ENCODE measurements at regions of chr3 and their contacts with region 1.

Region 1: GRCh38 chr3:134449277-134449676 is 36.5 kb downstream of the ANAPC13 start:
- DNase-seq: peak in 1 of 2 experiments; percentile 27
- H3K4me3 ChIP-seq: no peak overlapping the region
- H3K27ac ChIP-seq: no peak overlapping the region
- H3K4me1 ChIP-seq: peaks cover 18% of the 10 kb centered on the region
- H3K27me3 ChIP-seq: no peaks in the 10 kb centered on the region
- CTCF ChIP-seq: peak; percentile 49

Region 2: DNA sequence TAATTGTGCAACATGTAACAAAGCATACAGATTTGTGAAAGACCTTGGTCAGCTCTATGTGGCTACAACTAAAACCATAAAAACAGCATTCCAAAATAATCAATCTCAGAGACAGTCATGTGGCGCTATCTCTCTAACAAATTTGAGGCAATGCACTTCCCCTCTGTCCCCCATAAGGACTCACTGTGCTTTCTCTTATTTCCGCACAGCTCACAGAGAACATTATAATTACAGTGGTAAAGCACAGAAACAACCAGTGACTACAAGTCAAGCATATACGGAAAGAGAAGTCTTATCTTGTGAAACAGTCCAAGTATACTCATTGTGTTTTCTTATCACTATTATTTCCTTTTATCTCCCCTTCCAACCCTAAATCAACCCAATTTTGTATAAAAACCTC is 262.9 kb before region 1 on chr3:
- CTCF ChIA-PET with region 1: interaction called, 13 read pairs
- POLR2A ChIA-PET with region 1: no interaction called
- intact Hi-C with region 1: no loop called
- DNase-seq: no peak
- H3K4me3 ChIP-seq: no peak overlapping the region
- H3K27ac ChIP-seq: no peak overlapping the region
- H3K4me1 ChIP-seq: no peaks in the 10 kb centered on the region
- H3K27me3 ChIP-seq: no peaks in the 10 kb centered on the region
- CTCF ChIP-seq: no peak

Region 3: GRCh38 chr3:134590766-134591165 is 141.5 kb after region 1 on chr3:
- CTCF ChIA-PET with region 1: no interaction called
- POLR2A ChIA-PET with region 1: no interaction called
- intact Hi-C with region 1: no loop called
- DNase-seq: no peak
- H3K4me3 ChIP-seq: no peak overlapping the region
- H3K27ac ChIP-seq: no peak overlapping the region
- H3K4me1 ChIP-seq: no peaks in the 10 kb centered on the region
- H3K27me3 ChIP-seq: peaks cover 41% of the 10 kb centered on the region
- CTCF ChIP-seq: no peak

Region 4: DNA sequence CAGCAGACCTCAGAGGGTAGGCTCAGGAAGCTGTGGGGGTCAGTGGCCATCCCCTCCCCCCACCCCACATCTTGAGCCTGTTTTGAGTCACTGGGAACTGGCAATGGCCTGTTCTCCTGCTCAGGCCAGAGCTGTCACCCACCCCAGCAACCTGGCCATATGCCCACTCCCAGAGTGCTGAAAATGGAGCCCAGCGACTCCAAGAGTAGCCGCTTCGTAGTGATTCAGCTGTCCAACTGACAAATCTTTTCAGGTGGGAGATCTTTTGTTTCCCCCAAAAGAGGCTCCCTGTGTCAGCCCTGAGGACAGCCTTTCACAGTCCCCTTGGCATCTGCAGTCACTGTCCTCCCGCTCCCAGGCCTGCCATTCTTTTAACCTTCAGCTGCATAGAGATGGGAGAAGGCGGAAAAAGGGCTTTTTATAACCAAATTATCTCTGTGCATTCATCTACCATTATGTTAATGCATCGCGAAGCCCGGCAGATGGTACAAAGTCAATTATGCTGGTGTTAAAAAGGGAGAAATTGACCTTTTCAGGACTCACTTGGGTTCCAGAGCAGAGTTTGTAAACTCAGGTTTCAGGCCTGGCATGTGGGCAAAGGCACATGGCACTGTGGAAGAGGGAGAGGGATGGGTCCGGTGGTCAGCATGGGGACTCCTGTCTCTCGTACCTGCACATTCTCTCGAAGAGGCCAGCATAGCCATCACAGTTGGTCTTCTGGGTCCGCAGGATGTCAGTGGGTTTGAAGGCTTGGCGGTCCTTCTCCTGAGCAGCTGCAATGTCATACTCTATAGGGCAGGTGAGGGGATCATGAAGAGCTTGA is 169.4 kb after region 1 on chr3:
- CTCF ChIA-PET with region 1: no interaction called
- POLR2A ChIA-PET with region 1: no interaction called
- intact Hi-C with region 1: no loop called
- DNase-seq: no peak
- H3K4me3 ChIP-seq: no peak overlapping the region
- H3K27ac ChIP-seq: no peak overlapping the region
- H3K4me1 ChIP-seq: no peaks in the 10 kb centered on the region
- H3K27me3 ChIP-seq: peaks cover 35% of the 10 kb centered on the region
- CTCF ChIP-seq: no peak

Measured in PC-9 (cell line).